ENCODE measurements at regions of chr5 and their contacts with region 1.

Region 1: DNA sequence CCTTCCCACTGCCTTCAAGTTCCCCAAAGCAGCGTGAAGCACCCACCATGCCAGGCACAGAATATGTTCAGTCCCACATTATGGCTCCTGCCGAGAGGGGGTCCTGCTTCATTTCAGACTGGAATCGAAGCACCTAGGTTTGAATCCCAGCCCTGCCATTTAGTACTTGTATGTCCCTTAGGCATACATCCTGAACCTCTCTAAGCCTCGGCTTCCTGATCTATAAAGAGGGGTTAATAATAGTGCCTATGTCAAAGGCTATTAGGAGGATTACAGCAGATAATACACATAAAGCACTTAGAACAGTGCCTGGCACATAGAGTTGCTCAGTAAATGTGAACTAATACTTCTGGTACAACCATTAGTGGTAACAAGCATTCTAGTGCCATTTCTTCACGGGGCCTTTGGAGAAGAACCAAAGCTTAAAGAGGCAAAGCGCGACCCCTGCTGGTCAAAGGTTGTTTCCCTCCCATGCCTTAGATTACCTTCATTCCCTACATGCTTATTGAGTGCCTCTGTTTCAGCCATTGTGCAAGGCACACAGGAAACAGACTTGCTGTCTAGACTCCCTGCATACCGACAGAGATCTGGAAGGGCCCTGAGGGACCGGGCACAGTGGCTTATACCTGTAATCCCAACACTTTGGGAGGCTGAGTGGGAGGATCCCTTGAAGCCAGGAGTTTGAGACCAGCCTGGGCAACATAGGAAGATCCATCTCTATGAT is 98.2 kb downstream of the PPARGC1B start:
- DNase-seq: peak; percentile 65 to 90 (median 80)
- ATAC-seq: peak; percentile 79
- H3K4me3 ChIP-seq: no peak overlapping the region
- H3K4me3 Mint-ChIP-seq: no peak overlapping the region
- H3K27ac ChIP-seq: no peak overlapping the region
- H3K27ac Mint-ChIP-seq: no peak overlapping the region
- H3K4me1 ChIP-seq: no peaks in the 10 kb centered on the region
- H3K4me1 Mint-ChIP-seq: peaks cover 2% of the 10 kb centered on the region
- H3K27me3 ChIP-seq: no peaks in the 10 kb centered on the region
- H3K27me3 Mint-ChIP-seq: no peaks in the 10 kb centered on the region
- CTCF ChIP-seq: peak; percentile 84

Region 2: GRCh38 chr5:149628246-149628645 is 200.1 kb before region 1 on chr5:
- CTCF ChIA-PET with region 1: interaction called, 368 read pairs
- POLR2A ChIA-PET with region 1: no interaction called
- intact Hi-C with region 1: no loop called
- DNase-seq: no peak
- ATAC-seq: no peak
- H3K4me3 ChIP-seq: no peak overlapping the region
- H3K4me3 Mint-ChIP-seq: no peak overlapping the region
- H3K27ac ChIP-seq: no peak overlapping the region
- H3K27ac Mint-ChIP-seq: no peak overlapping the region
- H3K4me1 ChIP-seq: no peaks in the 10 kb centered on the region
- H3K4me1 Mint-ChIP-seq: no peaks in the 10 kb centered on the region
- H3K27me3 ChIP-seq: no peaks in the 10 kb centered on the region
- H3K27me3 Mint-ChIP-seq: no peaks in the 10 kb centered on the region
- CTCF ChIP-seq: no peak

Region 3: DNA sequence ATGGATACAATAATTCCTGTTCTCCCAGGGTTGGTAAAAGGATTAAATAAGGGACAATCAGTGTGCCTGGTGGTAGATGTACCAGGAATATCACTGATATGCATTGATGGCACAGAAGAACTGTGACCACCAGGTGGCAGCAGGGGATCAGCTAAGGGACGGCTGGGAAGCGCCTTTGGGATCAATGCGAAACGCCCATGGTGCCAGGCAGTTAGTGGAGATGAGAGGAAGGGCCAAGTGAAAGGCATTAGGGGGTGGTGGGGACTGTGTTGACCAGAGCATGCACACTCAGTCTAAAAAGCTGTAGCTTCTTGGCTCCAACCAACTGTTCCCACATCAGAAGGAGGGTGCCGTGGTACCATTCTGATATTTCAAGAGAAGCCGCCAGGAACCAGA is 191.5 kb before region 1 on chr5:
- CTCF ChIA-PET with region 1: interaction called, 368 read pairs
- POLR2A ChIA-PET with region 1: interaction called, 5 read pairs
- intact Hi-C with region 1: loop called (anchors 1 kb)
- DNase-seq: peak in 5 of 9 experiments; percentile 52 to 79 (median 75)
- ATAC-seq: peak; percentile 67
- H3K4me3 ChIP-seq: no peak overlapping the region
- H3K4me3 Mint-ChIP-seq: no peak overlapping the region
- H3K27ac ChIP-seq: no peak overlapping the region
- H3K27ac Mint-ChIP-seq: no peak overlapping the region
- H3K4me1 ChIP-seq: no peaks in the 10 kb centered on the region
- H3K4me1 Mint-ChIP-seq: no peaks in the 10 kb centered on the region
- H3K27me3 ChIP-seq: no peaks in the 10 kb centered on the region
- H3K27me3 Mint-ChIP-seq: no peaks in the 10 kb centered on the region
- CTCF ChIP-seq: peak; percentile 86

Region 4: GRCh38 chr5:149656576-149657182 is 171.6 kb before region 1 on chr5:
- CTCF ChIA-PET with region 1: interaction called, 5 read pairs
- POLR2A ChIA-PET with region 1: no interaction called
- intact Hi-C with region 1: loop called in 1 of 2 experiments (anchors 1 kb)
- DNase-seq: peak in 2 of 9 experiments; percentile 20 to 25
- ATAC-seq: no peak
- H3K4me3 ChIP-seq: no peak overlapping the region
- H3K4me3 Mint-ChIP-seq: no peak overlapping the region
- H3K27ac ChIP-seq: no peak overlapping the region
- H3K27ac Mint-ChIP-seq: no peak overlapping the region
- H3K4me1 ChIP-seq: no peaks in the 10 kb centered on the region
- H3K4me1 Mint-ChIP-seq: no peaks in the 10 kb centered on the region
- H3K27me3 ChIP-seq: no peaks in the 10 kb centered on the region
- H3K27me3 Mint-ChIP-seq: peaks cover 7% of the 10 kb centered on the region
- CTCF ChIP-seq: peak; percentile 32

Region 5: GRCh38 chr5:149667084-149667828 is 161.1 kb before region 1 on chr5:
- CTCF ChIA-PET with region 1: interaction called, 59 read pairs
- POLR2A ChIA-PET with region 1: interaction called, 3 read pairs
- intact Hi-C with region 1: loop called (anchors 1 kb)
- DNase-seq: peak in 3 of 9 experiments; percentile 5 to 48 (median 33)
- ATAC-seq: no peak
- H3K4me3 ChIP-seq: no peak overlapping the region
- H3K4me3 Mint-ChIP-seq: no peak overlapping the region
- H3K27ac ChIP-seq: no peak overlapping the region
- H3K27ac Mint-ChIP-seq: no peak overlapping the region
- H3K4me1 ChIP-seq: no peaks in the 10 kb centered on the region
- H3K4me1 Mint-ChIP-seq: no peaks in the 10 kb centered on the region
- H3K27me3 ChIP-seq: no peaks in the 10 kb centered on the region
- H3K27me3 Mint-ChIP-seq: peaks cover 9% of the 10 kb centered on the region
- CTCF ChIP-seq: peak; percentile 61